ENCODE measurements at regions of chr17 and their contacts with region 1.

Region 1: DNA sequence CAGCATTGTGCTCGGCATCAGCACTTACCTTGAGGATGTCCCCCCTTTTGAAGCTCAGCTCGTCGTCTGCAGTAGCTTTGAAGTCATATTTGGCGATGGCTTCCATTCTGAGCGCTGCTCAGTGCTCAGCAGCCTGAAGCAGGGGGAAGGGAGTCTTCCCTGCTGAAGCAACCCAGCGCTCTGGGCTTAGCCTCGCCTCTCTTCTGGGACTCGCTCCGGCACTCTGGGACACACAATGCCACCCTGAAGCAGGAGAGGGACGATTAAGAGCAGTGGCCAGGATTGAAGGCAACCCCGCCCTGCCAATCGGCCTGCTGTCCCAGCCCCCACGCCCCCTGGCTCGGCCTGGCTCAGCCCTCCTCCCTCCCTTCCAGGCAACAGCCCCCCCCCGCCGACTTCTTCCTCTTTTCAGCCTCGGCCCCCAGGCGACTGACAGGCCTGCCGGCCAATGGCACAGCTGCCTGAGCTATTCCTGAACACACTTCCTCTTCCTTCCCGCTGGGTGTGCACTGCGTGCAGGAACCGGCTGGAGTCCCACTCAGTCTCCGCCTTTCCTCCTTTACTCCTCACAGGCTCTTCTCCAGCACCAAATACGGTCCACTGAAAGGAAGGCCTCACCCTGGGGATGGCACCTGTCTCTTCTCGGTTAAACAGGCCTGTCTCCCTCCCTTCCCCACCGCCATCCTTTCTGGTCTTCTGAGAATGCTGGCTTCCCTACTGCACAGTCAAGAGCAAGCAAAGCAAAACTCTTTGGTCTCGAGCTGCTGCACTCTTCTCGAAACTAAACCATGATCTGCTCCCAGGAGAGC is 11.8 kb downstream of the GRB2 start:
- DNase-seq: peak; percentile 85
- CTCF ChIP-seq: no peak

Region 2: DNA sequence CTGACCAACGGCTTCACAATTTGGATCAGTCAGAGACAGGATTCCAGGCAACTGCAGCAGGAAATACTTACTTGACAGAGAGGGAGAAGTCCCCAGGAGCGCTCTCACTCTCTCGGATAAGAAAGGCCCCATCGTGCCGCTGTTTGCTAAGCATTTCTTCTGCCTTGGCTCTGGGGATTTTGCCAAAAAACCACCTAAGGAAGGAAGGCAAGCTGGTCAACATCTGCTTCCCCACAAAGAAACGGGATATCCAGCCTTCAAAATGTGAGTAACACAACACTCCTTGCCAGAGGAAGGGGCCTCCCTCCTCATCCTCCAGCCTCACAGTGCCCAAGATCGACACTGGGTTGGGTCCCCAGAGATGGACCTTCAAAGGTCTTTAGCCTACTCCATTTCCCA is 67.9 kb before region 1 on chr17:
- in situ Hi-C with region 1: no loop called
- DNase-seq: no peak
- CTCF ChIP-seq: no peak

Region 3: DNA sequence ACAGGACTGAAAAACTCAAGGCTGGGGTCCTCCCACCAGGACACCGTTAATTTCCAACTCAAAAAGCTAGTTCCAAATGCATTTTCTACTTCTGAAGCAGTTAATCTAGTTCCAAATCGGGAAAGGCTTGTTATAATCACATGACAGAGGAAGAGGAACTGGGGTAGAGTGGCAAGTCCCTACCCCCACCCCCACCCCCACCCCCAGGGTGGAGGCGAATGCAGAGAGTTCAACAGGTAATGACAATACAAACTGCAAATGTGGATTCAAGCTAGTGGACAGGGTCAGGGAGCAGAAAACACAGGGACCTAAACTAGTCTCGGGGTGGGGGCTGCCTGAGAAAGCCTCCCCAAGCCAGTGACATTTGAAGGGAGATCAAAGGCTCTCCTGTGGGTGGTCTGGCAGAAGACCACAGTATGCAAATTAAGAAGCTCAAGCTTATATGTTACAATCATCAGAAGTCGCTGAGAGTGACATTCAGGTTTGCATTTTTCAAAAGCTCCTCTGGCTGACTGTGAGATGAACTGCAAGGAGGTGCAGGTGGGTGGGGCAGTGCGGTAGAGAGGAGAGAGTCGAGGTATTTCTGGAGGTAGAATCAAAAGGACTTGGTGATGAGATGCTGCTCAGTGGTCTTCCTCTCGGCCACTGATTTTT is 48.1 kb before region 1 on chr17:
- in situ Hi-C with region 1: loop called (anchors 10 kb)
- DNase-seq: peak; percentile 65
- CTCF ChIP-seq: no peak

Measured in GM13977 (cell line).